Right lobe of liver (tissue), 6 donors: ENCODE measurements at regions of chr1 and their contacts with region 1.

Region 1: GRCh38 chr1:42747125-42747524 is 7.1 kb upstream of the CLDN19 start:
- DNase-seq: peak in 2 of 3 donors; percentile 35 to 45
- ATAC-seq: peak; percentile 59 to 70 (median 60)
- H3K4me3 ChIP-seq: no peak overlapping the region
- H3K27ac ChIP-seq: no peak overlapping the region
- H3K4me1 ChIP-seq: no peaks in the 10 kb centered on the region
- H3K27me3 ChIP-seq: no peaks in the 10 kb centered on the region
- CTCF ChIP-seq: peak; percentile 51 to 62 (median 54)
- POLR2A ChIP-seq: no peak

Region 2: DNA sequence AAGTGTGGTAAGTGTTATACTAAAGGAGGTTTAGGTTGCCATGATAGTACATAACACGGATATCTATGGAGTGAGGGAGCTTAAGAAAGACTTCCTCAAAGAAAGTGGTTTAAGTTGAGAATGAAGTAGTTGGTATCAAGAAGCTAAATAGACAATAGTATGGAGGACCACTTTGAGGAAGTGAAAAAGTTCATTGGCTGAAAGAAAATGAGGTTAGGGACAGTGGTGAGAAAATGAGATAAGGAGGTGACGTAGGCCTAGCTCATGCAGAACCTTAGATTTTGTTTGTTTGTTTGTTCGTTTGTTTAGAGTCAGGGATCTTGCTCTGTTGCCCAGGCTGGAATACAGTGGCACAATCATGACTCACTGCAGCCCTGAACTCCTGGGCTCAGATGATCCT is 161.1 kb before region 1 on chr1:
- intact Hi-C with region 1: loop called in 1 of 2 experiments (anchors 10 kb)
- DNase-seq: no peak
- ATAC-seq: no peak
- H3K4me3 ChIP-seq: no peak overlapping the region
- H3K27ac ChIP-seq: no peak overlapping the region
- H3K4me1 ChIP-seq: no peaks in the 10 kb centered on the region
- H3K27me3 ChIP-seq: no peaks in the 10 kb centered on the region
- CTCF ChIP-seq: no peak
- POLR2A ChIP-seq: no peak